IMR-90 (cell line): ENCODE measurements at regions of chr1 and their contacts with region 1.

Region 1: DNA sequence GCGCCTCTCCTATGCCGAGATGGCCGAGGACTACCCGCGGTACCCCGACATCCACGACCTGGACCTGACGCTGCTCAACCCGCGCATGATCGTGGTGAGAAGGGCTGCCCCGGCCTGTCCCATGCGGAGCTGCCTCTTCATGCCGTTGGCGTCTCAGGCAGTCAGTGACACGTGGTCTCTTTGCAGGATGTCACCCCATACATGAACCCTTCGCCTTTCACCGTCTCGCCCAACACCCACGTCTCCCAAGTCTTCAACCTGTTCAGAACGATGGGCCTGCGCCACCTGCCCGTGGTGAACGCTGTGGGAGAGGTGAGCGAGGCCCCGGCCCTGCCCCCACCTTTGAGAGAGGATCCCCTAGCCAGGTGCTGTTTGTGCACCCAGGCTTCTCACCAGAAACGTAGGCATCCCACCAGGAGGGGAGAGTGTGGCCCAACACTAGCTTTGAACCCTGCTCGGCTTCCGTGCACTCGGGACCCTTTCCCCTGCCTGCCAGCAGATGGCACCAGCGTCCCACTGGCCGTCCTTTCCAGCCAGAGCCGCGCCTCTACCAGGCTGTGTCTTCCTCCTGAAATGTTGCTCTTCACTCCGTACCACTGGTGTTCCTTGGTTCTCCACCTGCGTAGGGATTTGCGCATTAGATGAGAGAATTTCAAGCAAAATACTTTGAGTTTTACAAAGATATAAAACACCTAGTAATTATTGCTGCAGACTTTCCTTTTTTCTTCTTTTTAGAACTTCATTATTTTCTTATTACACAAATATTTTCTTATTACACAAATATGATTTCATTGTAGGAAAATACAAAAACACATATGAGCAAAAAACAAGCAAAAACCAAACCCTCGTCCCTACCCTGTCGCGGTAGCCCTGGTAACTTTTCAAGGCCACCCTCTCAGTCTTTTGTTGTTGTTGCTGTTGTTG is 9.0 kb downstream of the NPPA start:
- DNase-seq: peak; percentile 41
- ATAC-seq: peak; percentile 93
- H3K4me3 ChIP-seq: no peak overlapping the region
- H3K27ac ChIP-seq: no peak overlapping the region
- H3K4me1 ChIP-seq: peaks cover 2% of the 10 kb centered on the region; the same call in 1 of the 2 replicates
- H3K27me3 ChIP-seq: no peaks in the 10 kb centered on the region
- CTCF ChIP-seq: peak; percentile 96
- POLR2A ChIP-seq: 0 out of 2 replicates have a peak, but pooled peaks have one; percentile 35
- RAD21 ChIP-seq: peak; percentile 93

Region 2: DNA sequence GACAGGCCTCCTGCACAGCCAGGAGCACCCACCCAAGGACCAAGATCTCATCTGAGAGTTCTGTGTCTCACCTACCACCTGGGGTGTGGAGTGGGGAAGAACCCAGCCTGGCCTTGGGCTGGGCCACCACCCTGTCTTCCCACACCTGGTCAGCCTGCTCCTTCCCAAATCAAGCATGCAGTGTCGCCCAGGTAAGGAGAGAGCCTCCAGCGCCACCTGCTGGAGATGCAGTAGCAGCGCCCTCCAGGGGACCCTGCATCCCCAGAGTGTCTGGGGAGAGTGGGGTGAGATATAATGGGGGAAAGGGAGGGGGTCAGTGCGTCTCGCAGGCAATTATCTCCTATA is 55.3 kb after region 1 on chr1:
- CTCF ChIA-PET with region 1: interaction called, 5 read pairs
- POLR2A ChIA-PET with region 1: no interaction called
- dilution Hi-C with region 1: no loop called
- in situ Hi-C with region 1: loop called (anchors 5 kb)
- intact Hi-C with region 1: loop called (anchors 1 kb)
- DNase-seq: peak; percentile 15
- ATAC-seq: peak; percentile 92
- H3K4me3 ChIP-seq: no peak overlapping the region
- H3K27ac ChIP-seq: no peak overlapping the region
- H3K4me1 ChIP-seq: no peaks in the 10 kb centered on the region
- H3K27me3 ChIP-seq: peaks cover 41% of the 10 kb centered on the region
- CTCF ChIP-seq: peak; percentile 72
- POLR2A ChIP-seq: no peak
- RAD21 ChIP-seq: peak; percentile 71

Region 3: GRCh38 chr1:11898831-11899467 is 60.3 kb after region 1 on chr1:
- CTCF ChIA-PET with region 1: interaction called, 3 read pairs
- POLR2A ChIA-PET with region 1: no interaction called
- dilution Hi-C with region 1: no loop called
- in situ Hi-C with region 1: loop called (anchors 5 kb)
- intact Hi-C with region 1: loop called (anchors 1 kb)
- DNase-seq: no peak
- ATAC-seq: peak; percentile 46; the same call in 1 of the 2 replicates
- H3K4me3 ChIP-seq: no peak overlapping the region
- H3K27ac ChIP-seq: no peak overlapping the region
- H3K4me1 ChIP-seq: no peaks in the 10 kb centered on the region
- H3K27me3 ChIP-seq: peaks cover 27% of the 10 kb centered on the region
- CTCF ChIP-seq: no peak
- POLR2A ChIP-seq: no peak
- RAD21 ChIP-seq: no peak